CD4-positive, alpha-beta memory T cell (primary cell): ENCODE measurements at regions of chr19 and their contacts with region 1.

Region 1: GRCh38 chr19:42121656-42122069 is 10.6 kb downstream of the POU2F2 start:
- DNase-seq: peak; percentile 50 to 91 (median 52)
- H3K4me3 ChIP-seq: peak overlapping the region in 1 of 2 donors; percentile 41
- H3K4me3 Mint-ChIP-seq: peak overlapping the region; percentile 55 to 89 (median 75)
- H3K27ac ChIP-seq: peak overlapping the region; percentile 83
- H3K27ac Mint-ChIP-seq: peak overlapping the region; percentile 88 to 99 (median 96)
- H3K4me1 ChIP-seq: peaks cover 52% of the 10 kb centered on the region
- H3K4me1 Mint-ChIP-seq: peaks cover 38 to 66% (median 51%) of the 10 kb centered on the region in 4 donors
- H3K27me3 ChIP-seq: no peaks in the 10 kb centered on the region
- H3K27me3 Mint-ChIP-seq: no peaks in the 10 kb centered on the region

Region 2: DNA sequence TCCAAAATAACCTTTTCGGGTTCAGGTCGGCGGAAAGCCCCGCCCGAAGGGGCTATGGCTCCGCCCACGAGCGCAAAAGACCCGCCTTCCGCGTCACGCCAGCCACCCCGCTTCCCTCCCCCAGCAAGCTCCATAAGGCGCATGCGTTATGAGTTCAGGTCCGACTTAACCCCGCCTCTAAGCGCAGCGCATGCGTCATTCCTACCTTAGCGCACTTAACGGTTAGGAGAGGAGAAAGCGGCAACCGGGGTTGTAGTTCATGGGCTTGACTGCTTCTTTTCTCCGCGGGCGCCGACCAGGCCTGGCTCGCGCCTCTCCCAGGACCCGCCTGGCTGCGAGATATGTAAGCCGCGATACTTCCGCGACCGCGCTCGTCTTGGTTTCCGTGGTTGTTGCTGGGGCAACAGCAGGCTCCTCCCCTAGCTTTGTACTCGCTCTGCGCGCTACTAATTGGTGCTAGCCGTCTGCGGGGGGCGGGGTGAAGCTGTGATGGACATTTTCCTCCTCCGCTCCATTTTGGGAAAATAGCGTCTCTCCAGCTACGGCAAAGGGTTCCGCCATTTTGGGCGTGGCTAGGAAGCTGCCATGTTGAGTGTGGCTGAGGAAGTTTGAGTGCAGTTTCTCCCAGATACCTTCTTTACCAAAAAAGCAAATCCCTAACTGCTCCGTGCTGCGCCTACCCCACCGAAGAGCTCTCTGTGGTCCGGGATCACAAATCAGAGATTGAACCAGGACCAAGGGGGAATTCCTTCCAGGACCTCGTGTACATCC is 757.7 kb before region 1 on chr19 and contains the start of gene B9D2:
- CTCF ChIA-PET with region 1: no interaction called
- POLR2A ChIA-PET with region 1: no interaction called
- intact Hi-C with region 1: no loop called
- DNase-seq: peak; percentile 98 to 99 (median 99)
- H3K4me3 ChIP-seq: peak within 1 kb of the TSS; percentile 77 to 91
- H3K4me3 Mint-ChIP-seq: peak within 1 kb of the TSS; percentile 93 to 98 (median 95)
- H3K27ac ChIP-seq: peak within 1 kb of the TSS; percentile 99
- H3K27ac Mint-ChIP-seq: peak within 1 kb of the TSS; percentile 97 to 100 (median 100)
- H3K4me1 ChIP-seq: peaks cover 24% of the 10 kb centered on the region
- H3K4me1 Mint-ChIP-seq: peaks cover 15 to 45% (median 23%) of the 10 kb centered on the region in 4 donors
- H3K27me3 ChIP-seq: no peaks in the 10 kb centered on the region
- H3K27me3 Mint-ChIP-seq: no peaks in the 10 kb centered on the region
- total RNA-seq, gene B9D2: 11.6 to 15.2 TPM

Region 3: GRCh38 chr19:42176990-42177685 is 55.5 kb after region 1 on chr19:
- CTCF ChIA-PET with region 1: interaction called, 4 read pairs
- POLR2A ChIA-PET with region 1: interaction called, 12 read pairs
- intact Hi-C with region 1: no loop called
- DNase-seq: peak; percentile 75 to 79 (median 78)
- H3K4me3 ChIP-seq: peak overlapping the region in 1 of 2 donors; percentile 59
- H3K4me3 Mint-ChIP-seq: no peak overlapping the region
- H3K27ac ChIP-seq: no peak overlapping the region
- H3K27ac Mint-ChIP-seq: no peak overlapping the region
- H3K4me1 ChIP-seq: peaks cover 29% of the 10 kb centered on the region
- H3K4me1 Mint-ChIP-seq: peaks cover 10 to 29% (median 18%) of the 10 kb centered on the region in 4 donors
- H3K27me3 ChIP-seq: peaks cover 17% of the 10 kb centered on the region
- H3K27me3 Mint-ChIP-seq: peaks cover 4 to 11% of the 10 kb centered on the region in 2 donors